ENCODE measurements at regions of chr20 and their contacts with region 1.

Region 1: GRCh38 chr20:42150225-42150624 is 532.0 kb upstream of the CHD6 start:
- DNase-seq: no peak
- H3K4me3 ChIP-seq: no peak overlapping the region
- H3K27ac ChIP-seq: no peak overlapping the region
- H3K4me1 ChIP-seq: no peaks in the 10 kb centered on the region
- CTCF ChIP-seq: no peak

Region 2: DNA sequence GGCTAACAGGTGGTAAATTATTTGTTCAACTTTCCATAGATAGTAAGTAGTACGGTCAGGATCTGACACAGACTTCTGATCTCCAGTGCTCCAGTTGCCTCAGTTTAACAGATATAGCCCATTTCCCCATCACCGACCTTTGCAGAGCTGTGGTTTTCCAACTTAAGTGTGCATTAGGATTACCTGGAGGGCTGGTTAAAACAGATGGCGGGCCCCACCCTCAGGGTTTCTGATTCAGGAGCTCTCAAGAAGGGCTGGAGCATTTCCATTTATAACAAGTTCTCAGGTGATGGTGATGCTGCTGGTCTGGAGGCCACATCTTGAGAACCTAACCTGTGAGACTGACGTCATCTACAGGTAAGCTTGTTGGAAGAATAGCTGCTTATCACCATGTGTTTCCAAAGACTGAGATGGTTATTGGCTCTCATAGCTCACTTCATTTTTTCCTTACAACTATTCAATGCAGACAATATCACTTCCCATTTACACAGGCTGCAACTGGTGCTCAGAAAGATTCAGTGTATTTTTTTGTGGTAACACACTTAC is 171.9 kb before region 1 on chr20:
- CTCF ChIA-PET with region 1: no interaction called
- POLR2A ChIA-PET with region 1: no interaction called
- intact Hi-C with region 1: no loop called
- DNase-seq: no peak
- H3K4me3 ChIP-seq: no peak overlapping the region
- H3K27ac ChIP-seq: no peak overlapping the region
- H3K4me1 ChIP-seq: no peaks in the 10 kb centered on the region
- CTCF ChIP-seq: no peak

Region 3: GRCh38 chr20:42074944-42075343 is 75.3 kb before region 1 on chr20:
- CTCF ChIA-PET with region 1: no interaction called
- POLR2A ChIA-PET with region 1: interaction called, 10 read pairs
- intact Hi-C with region 1: no loop called
- DNase-seq: no peak
- H3K4me3 ChIP-seq: no peak overlapping the region
- H3K27ac ChIP-seq: no peak overlapping the region
- H3K4me1 ChIP-seq: no peaks in the 10 kb centered on the region
- CTCF ChIP-seq: no peak

Region 4: DNA sequence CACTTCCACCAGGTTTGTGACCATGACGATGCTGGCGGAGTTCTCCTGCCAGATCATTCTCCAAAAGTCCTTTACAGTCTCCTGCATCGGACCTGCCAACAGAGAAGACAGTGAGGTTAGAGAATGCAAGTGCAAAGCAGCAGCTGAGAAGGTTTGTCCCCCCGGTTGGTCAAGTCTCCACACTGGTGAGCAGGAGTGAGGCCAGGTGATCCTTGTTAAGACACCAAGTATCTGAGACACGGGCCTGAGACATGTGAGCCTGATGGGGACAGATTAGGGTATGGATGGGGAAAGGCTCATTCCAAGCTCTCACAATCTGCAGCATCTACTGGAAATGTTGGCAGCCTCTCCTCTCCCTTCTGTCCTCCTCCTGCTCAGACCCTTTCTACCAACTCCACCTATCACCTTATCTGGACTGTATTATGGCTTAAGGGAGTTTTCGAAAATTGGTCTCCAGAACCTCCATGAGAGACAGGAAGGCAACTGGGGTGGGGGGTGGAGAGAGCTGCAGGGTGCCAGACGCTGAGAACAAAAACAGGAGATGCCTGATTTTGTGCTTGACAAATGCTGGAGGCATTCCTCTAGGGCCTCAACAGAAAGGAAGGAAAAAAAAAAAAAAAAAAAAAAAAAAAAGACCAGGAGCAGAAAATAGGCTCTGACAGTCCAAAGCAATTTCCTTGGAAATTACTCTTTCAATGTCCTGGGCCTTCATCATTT is 31.7 kb before region 1 on chr20:
- CTCF ChIA-PET with region 1: no interaction called
- POLR2A ChIA-PET with region 1: no interaction called
- intact Hi-C with region 1: no loop called
- DNase-seq: no peak
- H3K4me3 ChIP-seq: no peak overlapping the region
- H3K27ac ChIP-seq: no peak overlapping the region
- H3K4me1 ChIP-seq: no peaks in the 10 kb centered on the region
- CTCF ChIP-seq: no peak

Region 5: GRCh38 chr20:42203389-42203788 is 53.2 kb after region 1 on chr20:
- CTCF ChIA-PET with region 1: no interaction called
- POLR2A ChIA-PET with region 1: no interaction called
- intact Hi-C with region 1: no loop called
- DNase-seq: no peak
- H3K4me3 ChIP-seq: no peak overlapping the region
- H3K27ac ChIP-seq: no peak overlapping the region
- H3K4me1 ChIP-seq: no peaks in the 10 kb centered on the region
- CTCF ChIP-seq: no peak